Calu3 (cell line): ENCODE measurements at regions of chr12 and their contacts with region 1.

Region 1: GRCh38 chr12:111673503-111673902 is 12.3 kb downstream of the BRAP start:
- DNase-seq: peak; percentile 23
- H3K4me3 Mint-ChIP-seq: no peak overlapping the region
- H3K27ac Mint-ChIP-seq: no peak overlapping the region
- H3K4me1 Mint-ChIP-seq: no peaks in the 10 kb centered on the region
- H3K27me3 Mint-ChIP-seq: no peaks in the 10 kb centered on the region
- CTCF ChIP-seq: no peak

Region 2: GRCh38 chr12:111529424-111530368 is 143.8 kb before region 1 on chr12:
- CTCF ChIA-PET with region 1: no interaction called
- intact Hi-C with region 1: loop called (anchors 10 kb)
- DNase-seq: peak; percentile 68
- H3K4me3 Mint-ChIP-seq: no peak overlapping the region
- H3K27ac Mint-ChIP-seq: no peak overlapping the region
- H3K4me1 Mint-ChIP-seq: no peaks in the 10 kb centered on the region
- H3K27me3 Mint-ChIP-seq: no peaks in the 10 kb centered on the region
- CTCF ChIP-seq: peak; percentile 71